ENCODE measurements at regions of chr2 and their contacts with region 1.

Region 1: GRCh38 chr2:101151141-101151858 is at the start of gene TBC1D8:
- DNase-seq: peak; percentile 79
- H3K4me3 ChIP-seq: peak within 1 kb of the TSS; percentile 81 to 92
- H3K27ac ChIP-seq: peak within 1 kb of the TSS; percentile 92
- H3K4me1 ChIP-seq: peaks cover 2% of the 10 kb centered on the region
- H3K27me3 ChIP-seq: no peaks in the 10 kb centered on the region
- CTCF ChIP-seq: peak in 1 of 4 experiments; percentile 11
- POLR2A ChIP-seq: peak; percentile 92
- total RNA-seq, gene TBC1D8: 86.1 to 149 TPM

Region 2: GRCh38 chr2:100610381-100610831 is 540.9 kb before region 1 on chr2:
- intact Hi-C with region 1: loop called (anchors 5 kb)
- DNase-seq: peak; percentile 46
- H3K4me3 ChIP-seq: no peak overlapping the region
- H3K27ac ChIP-seq: no peak overlapping the region
- H3K4me1 ChIP-seq: no peaks in the 10 kb centered on the region
- H3K27me3 ChIP-seq: no peaks in the 10 kb centered on the region
- CTCF ChIP-seq: peak in 3 of 4 experiments; percentile 18 to 73 (median 57)
- POLR2A ChIP-seq: no peak

Region 3: DNA sequence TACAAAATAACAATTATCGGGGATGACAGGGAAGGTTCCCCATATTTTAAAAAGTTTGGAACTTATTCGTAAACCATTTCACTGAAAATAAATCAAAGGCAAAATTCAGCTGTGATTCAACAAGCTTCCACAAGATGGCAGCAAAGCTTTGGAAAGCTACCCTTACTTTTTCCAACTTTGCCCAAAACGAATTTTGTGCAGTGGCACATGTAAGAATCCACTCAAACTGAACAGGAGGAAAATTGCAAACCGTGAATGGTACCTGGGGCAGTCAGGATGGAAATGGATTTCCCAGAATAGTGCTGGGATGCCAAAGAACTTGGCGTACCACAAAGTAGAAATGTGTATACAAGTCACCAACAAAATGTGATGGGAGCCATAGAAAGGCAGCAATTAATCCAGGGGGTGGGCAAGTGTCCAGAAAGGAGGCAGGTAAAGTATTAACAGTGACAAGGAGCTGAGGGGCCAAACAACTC is 138.6 kb before region 1 on chr2:
- intact Hi-C with region 1: loop called (anchors 1 kb)
- DNase-seq: peak; percentile 33
- H3K4me3 ChIP-seq: no peak overlapping the region
- H3K27ac ChIP-seq: no peak overlapping the region
- H3K4me1 ChIP-seq: peaks cover 1% of the 10 kb centered on the region
- H3K27me3 ChIP-seq: no peaks in the 10 kb centered on the region
- CTCF ChIP-seq: peak; percentile 68 to 89 (median 82)
- POLR2A ChIP-seq: no peak

Region 4: DNA sequence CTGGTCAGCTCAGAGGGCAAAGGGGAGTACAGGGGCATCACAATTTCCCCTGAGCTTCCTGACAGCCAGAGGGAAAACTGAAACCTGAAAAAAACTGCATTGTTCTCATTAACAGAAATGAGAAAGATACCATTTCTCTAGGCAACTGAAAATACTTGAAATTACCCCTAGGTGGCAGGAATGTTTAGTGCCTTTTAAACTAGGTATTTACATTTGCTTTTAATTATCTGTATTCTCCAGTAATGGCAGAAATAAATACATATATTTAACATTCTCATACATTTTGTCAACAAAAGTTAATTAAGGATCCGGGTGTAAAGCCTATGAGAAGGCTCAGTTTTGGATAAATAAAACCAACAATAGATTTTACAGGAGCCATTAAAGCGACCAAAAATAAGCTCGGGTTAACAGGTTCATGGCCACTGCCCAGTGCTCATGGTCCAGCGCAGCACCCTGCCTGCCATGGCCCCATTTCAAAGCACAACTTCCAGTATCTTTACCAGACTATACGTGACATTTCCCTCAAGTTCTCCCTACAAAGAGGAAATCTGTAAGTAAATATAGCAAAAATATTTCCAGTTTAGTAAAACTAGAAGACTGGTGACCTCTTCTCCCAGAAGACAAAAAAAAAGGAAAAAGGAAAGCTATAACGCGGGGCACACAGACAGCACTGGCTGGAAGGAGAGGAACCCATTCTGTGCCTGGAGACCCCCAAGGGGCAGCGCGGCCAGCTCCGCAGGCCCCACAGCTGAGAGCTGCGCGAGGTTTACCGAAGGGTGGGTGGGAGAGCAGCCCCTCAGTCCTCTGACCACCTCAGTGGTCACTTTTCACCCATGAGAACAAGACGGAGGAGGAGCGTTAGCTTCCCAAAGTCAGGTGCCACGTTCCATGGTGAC is 114.5 kb before region 1 on chr2:
- intact Hi-C with region 1: loop called (anchors 5 kb)
- DNase-seq: no peak
- H3K4me3 ChIP-seq: no peak overlapping the region
- H3K27ac ChIP-seq: no peak overlapping the region
- H3K4me1 ChIP-seq: no peaks in the 10 kb centered on the region
- H3K27me3 ChIP-seq: no peaks in the 10 kb centered on the region
- CTCF ChIP-seq: peak in 3 of 4 experiments; percentile 56 to 79 (median 66)
- POLR2A ChIP-seq: no peak

Region 5: DNA sequence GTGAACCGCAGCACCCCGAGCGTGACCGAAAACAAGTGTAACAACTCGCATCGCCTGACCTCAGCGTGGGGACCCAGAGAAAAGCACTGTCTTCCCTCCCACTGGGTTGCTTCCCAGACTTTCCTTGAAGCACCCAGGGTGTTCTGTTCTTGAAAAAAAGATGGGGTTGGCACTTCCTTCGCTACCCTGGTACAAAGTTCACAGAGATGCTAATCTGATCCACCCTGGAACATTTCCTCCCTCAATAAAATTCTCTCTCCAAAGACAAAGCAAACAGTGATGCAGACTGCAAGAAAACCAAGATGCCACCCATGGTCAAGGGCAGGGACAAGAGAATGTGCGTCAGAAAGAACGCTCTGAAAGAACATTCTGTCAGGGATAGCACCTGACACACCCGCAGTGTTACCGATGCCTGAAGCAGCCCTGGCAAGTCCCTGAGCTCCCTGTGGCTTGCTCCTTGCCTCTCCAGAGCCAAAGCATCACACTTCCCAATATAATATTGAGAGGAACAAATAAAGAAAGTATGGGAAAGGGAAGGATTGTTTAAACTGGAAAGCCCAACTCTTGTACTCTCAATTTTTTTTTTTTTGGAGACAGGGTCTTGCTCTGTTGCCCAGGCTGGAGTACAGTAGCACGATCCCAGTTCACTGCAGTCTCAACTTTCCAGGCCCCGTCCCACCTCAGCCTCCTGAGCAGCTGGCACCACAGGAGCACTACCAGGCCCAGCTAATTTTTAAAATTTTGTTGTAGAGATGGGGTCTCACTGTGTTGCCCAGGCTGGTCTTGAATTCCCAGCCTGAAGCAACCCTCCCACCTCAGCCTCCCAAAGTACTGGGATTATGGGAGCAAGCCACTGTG is 70.9 kb before region 1 on chr2:
- intact Hi-C with region 1: loop called (anchors 5 kb)
- DNase-seq: peak; percentile 95
- H3K4me3 ChIP-seq: no peak overlapping the region
- H3K27ac ChIP-seq: peak overlapping the region; percentile 88 to 93
- H3K4me1 ChIP-seq: peaks cover 11% of the 10 kb centered on the region
- H3K27me3 ChIP-seq: no peaks in the 10 kb centered on the region
- CTCF ChIP-seq: peak in 1 of 4 experiments; percentile 6
- POLR2A ChIP-seq: no peak